Cardiac septum (tissue), 1 donor: ENCODE measurements at regions of chr1 and their contacts with region 1.

Region 1: GRCh38 chr1:204941421-204942338 is 71.0 kb downstream of the NFASC start:
- DNase-seq: peak; percentile 81

Region 2: GRCh38 chr1:204565617-204566582 is 375.8 kb before region 1 on chr1:
- intact Hi-C with region 1: loop called (anchors 5 kb)
- DNase-seq: no peak

Region 3: DNA sequence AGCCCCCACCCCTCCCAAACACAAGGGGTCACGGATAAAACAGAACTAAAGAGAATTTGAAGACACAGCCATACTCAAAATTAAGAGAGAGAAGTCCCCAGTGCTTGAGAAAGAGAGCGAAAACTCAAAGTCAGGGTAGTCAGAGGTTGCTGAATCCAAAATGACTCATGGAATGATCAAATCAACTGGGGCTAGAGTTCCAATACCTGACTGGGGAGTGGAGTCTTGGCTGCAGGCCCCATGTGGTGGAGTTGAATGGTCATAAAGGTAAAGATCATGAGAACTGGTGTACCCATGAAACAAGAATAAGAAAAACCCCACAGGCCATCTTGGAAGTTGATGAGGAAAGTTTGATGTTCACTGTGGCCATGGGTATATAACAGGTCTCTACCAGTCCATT is 171.7 kb before region 1 on chr1:
- intact Hi-C with region 1: no loop called
- DNase-seq: no peak

Region 4: GRCh38 chr1:204858363-204858821 is 83.3 kb before region 1 on chr1:
- intact Hi-C with region 1: no loop called
- DNase-seq: no peak

Region 5: DNA sequence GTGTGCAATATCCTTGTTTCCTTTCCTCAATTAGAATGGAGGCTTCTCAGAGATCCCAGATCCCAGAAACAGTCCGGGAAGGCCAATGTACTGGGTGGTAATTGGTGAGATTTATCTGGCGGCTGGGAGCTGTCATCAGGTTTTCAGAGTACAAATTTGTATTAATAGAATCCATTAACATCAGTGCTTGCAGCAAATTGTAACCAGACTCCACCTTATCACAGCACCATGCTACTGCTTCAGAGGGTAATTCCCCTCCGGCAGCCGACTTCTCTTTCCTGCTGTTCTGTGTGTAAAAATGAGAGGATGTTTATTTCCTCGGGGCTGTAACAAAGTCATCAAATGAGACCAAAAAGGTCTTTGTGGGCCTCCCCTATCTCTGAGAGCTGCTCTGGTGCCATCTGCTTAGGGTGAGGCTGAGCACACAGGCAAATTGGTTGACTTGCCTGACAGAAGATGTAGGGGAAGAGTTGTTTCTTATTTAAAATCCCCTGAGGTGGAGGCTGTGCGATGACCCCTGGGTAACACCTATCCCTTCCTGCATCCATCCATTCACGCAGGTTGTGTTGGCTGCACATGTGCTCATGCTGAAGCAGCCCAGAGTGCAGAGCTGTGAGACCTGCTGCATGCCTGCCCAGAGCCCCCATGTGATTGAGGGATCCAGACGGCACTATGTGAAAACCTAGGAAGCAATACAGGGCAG is 51.8 kb before region 1 on chr1:
- intact Hi-C with region 1: loop called (anchors 5 kb)
- DNase-seq: no peak